Endothelial cell of umbilical vein (primary cell): ENCODE measurements at regions of chr22 and their contacts with region 1.

Region 1: GRCh38 chr22:42856865-42857704 is at the start of gene ARFGAP3:
- DNase-seq: peak; percentile 94
- H3K4me3 ChIP-seq: peak within 1 kb of the TSS; percentile 61 to 81 (median 65)
- H3K27ac ChIP-seq: peak within 1 kb of the TSS; percentile 89
- H3K4me1 ChIP-seq: peaks cover 2% of the 10 kb centered on the region
- H3K27me3 ChIP-seq: no peaks in the 10 kb centered on the region
- CTCF ChIP-seq: no peak
- POLR2A ChIP-seq: peak; percentile 78
- total RNA-seq, gene ARFGAP3: 33.4 and 40.2 TPM in 2 replicates

Region 2: GRCh38 chr22:42544686-42545085 is 312.4 kb before region 1 on chr22:
- CTCF ChIA-PET with region 1: no interaction called
- POLR2A ChIA-PET with region 1: no interaction called
- dilution Hi-C with region 1: no loop called
- intact Hi-C with region 1: no loop called
- DNase-seq: peak; percentile 61
- H3K4me3 ChIP-seq: no peak overlapping the region
- H3K27ac ChIP-seq: no peak overlapping the region
- H3K4me1 ChIP-seq: no peaks in the 10 kb centered on the region
- H3K27me3 ChIP-seq: peaks cover 0 to 9% of the 10 kb centered on the region in 2 experiments
- CTCF ChIP-seq: no peak
- POLR2A ChIP-seq: no peak

Region 3: GRCh38 chr22:42868751-42869251 is 11.7 kb after region 1 on chr22:
- CTCF ChIA-PET with region 1: interaction called, 21 read pairs
- POLR2A ChIA-PET with region 1: no interaction called
- dilution Hi-C with region 1: no loop called
- intact Hi-C with region 1: no loop called
- DNase-seq: no peak
- H3K4me3 ChIP-seq: no peak overlapping the region
- H3K27ac ChIP-seq: no peak overlapping the region
- H3K4me1 ChIP-seq: no peaks in the 10 kb centered on the region
- H3K27me3 ChIP-seq: no peaks in the 10 kb centered on the region
- CTCF ChIP-seq: no peak
- POLR2A ChIP-seq: no peak

Region 4: DNA sequence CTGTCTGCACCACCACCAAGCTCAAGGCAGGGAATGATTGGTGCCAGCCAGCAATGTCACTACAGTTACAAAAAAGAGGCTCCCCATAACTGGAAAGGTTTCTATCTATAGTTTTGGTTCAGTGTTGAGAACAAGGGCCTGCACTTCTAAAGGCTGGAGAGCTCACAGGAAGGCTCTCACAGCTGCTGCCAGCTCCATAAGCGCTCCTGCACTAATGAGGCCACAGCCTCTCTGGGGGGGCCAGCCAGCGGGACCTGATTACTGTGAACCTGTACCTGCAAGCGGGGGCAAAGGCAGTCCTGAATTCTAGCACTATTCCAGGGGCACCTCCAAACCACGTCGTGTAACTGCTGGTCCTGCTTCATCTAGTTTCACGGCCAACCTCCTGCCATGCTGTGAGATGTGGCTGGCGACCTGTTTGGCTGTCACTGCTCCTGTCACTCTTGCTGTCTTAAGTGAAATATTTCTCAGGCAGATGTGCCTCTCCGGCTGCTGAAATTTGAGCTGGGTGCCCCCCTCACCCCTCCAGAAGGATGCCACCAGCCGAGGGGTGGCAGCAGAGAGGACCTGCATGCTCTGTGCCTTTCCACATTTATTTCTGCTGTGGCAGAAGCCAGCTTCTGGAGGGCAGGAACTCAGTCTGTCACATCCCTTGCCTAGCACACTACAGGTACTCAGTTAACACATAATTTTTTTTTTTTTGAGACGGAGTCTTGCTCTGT is 53.3 kb after region 1 on chr22:
- CTCF ChIA-PET with region 1: no interaction called
- POLR2A ChIA-PET with region 1: no interaction called
- dilution Hi-C with region 1: no loop called
- intact Hi-C with region 1: no loop called
- DNase-seq: no peak
- H3K4me3 ChIP-seq: no peak overlapping the region
- H3K27ac ChIP-seq: no peak overlapping the region
- H3K4me1 ChIP-seq: peaks cover 18% of the 10 kb centered on the region
- H3K27me3 ChIP-seq: no peaks in the 10 kb centered on the region
- CTCF ChIP-seq: no peak
- POLR2A ChIP-seq: no peak